ENCODE measurements at regions of chrX and their contacts with region 1.

Region 1: GRCh38 chrX:12946838-12947544 is 27.9 kb upstream of the TMSB4X start:
- DNase-seq: peak; percentile 85
- H3K4me3 Mint-ChIP-seq: peak overlapping the region; percentile 41
- H3K27ac Mint-ChIP-seq: peak overlapping the region; percentile 98
- H3K4me1 Mint-ChIP-seq: peaks cover 55% of the 10 kb centered on the region
- H3K27me3 Mint-ChIP-seq: no peaks in the 10 kb centered on the region

Region 2: DNA sequence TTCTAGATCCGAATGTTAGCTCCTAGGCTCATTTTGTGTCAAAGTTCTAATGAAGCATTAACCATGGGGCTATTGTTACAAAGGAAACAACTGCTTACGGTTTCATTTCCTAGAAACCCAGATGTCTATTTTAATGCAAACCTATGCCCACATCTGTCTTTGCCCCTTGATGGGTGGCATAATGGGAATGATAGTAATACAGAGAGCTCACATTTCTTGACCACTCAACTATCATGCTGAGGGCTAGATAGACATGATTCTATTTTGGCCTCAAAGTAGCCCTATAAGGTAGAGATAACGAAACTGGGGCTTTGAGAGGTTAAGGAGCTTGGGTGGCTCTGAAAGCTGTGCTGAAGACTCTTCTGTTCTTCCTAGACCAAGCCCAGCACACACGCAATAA is 78.2 kb before region 1 on chrX:
- CTCF ChIA-PET with region 1: no interaction called
- intact Hi-C with region 1: no loop called
- DNase-seq: no peak
- H3K4me3 Mint-ChIP-seq: no peak overlapping the region
- H3K27ac Mint-ChIP-seq: no peak overlapping the region
- H3K4me1 Mint-ChIP-seq: peaks cover 14% of the 10 kb centered on the region
- H3K27me3 Mint-ChIP-seq: no peaks in the 10 kb centered on the region

Region 3: GRCh38 chrX:12974796-12975669 is 28.0 kb after region 1 on chrX and contains the start of gene TMSB4X:
- CTCF ChIA-PET with region 1: interaction called, 125 read pairs
- intact Hi-C with region 1: loop called (anchors 1 kb)
- DNase-seq: peak; percentile 84
- H3K4me3 Mint-ChIP-seq: peak within 1 kb of the TSS; percentile 82
- H3K27ac Mint-ChIP-seq: peak within 1 kb of the TSS; percentile 96
- H3K4me1 Mint-ChIP-seq: peaks cover 18% of the 10 kb centered on the region
- H3K27me3 Mint-ChIP-seq: no peaks in the 10 kb centered on the region
- total RNA-seq, gene TMSB4X: 5,535 to 5,691 TPM

Region 4: GRCh38 chrX:13051529-13052172 is 104.7 kb after region 1 on chrX:
- CTCF ChIA-PET with region 1: interaction called, 5 read pairs
- intact Hi-C with region 1: loop called (anchors 1 kb)
- DNase-seq: peak; percentile 43
- H3K4me3 Mint-ChIP-seq: peak overlapping the region; percentile 36
- H3K27ac Mint-ChIP-seq: peak overlapping the region; percentile 95
- H3K4me1 Mint-ChIP-seq: peaks cover 77% of the 10 kb centered on the region
- H3K27me3 Mint-ChIP-seq: no peaks in the 10 kb centered on the region

Region 5: DNA sequence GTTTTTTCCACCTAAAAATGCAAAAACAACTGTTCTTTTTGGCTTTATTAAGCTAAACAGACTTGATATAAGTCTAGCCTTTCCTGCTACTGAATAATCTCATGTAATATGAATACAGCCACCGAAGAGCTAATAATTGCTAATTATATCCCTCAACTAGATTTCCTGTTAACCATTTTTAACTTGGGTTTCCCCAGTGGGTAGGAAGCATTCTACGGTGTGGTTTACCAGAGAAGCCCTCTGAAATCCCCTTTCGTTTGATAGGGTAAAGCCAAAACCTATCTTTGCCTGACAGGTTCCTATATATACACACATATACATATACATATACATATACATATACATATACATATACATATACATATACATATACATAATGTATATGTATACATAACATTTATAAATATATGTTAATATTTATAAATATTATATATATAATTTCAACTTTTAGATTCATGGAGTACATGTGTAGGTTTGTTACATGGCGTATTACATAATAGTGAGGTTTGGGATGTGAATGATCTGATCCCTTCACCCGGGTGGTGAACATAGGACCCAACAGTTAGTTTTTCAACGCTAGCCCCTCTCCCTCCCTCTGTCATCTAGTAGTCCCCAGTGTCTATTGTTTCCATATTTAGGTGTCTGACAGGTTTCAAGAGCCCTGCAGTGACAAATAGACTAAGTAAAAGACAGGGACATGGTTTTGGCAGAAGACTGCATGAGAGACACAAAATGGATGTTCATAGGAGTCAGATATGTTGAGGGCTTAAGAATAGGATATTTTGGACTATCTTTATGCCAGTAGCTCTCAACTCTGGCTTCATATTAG is 310.4 kb after region 1 on chrX:
- CTCF ChIA-PET with region 1: interaction called, 5 read pairs
- intact Hi-C with region 1: loop called (anchors 5 kb)
- DNase-seq: peak; percentile 17
- H3K4me3 Mint-ChIP-seq: no peak overlapping the region
- H3K27ac Mint-ChIP-seq: no peak overlapping the region
- H3K4me1 Mint-ChIP-seq: peaks cover 29% of the 10 kb centered on the region
- H3K27me3 Mint-ChIP-seq: no peaks in the 10 kb centered on the region

Region 6: DNA sequence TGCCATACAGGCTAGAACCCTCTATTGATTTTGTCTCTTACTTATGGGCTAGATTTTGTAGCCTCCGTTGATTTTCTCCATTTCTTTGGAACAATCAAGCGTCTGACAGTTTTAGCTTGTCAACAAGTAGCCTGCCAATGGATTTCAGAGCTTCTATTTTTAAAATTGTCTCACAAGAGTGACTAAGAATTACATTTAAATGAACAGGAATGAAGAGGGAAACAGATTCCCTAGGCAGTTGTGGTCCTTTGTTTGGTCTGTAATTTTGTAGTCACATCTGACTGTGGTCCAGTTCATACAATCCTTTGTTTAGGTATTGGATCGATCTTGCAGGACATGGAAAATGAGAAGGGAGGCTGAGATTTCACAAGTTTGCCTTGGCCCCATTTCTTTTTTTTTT is 535.8 kb after region 1 on chrX:
- CTCF ChIA-PET with region 1: interaction called, 36 read pairs
- intact Hi-C with region 1: no loop called
- DNase-seq: no peak
- H3K4me3 Mint-ChIP-seq: no peak overlapping the region
- H3K27ac Mint-ChIP-seq: no peak overlapping the region
- H3K4me1 Mint-ChIP-seq: peaks cover 10% of the 10 kb centered on the region
- H3K27me3 Mint-ChIP-seq: no peaks in the 10 kb centered on the region

Region 7: DNA sequence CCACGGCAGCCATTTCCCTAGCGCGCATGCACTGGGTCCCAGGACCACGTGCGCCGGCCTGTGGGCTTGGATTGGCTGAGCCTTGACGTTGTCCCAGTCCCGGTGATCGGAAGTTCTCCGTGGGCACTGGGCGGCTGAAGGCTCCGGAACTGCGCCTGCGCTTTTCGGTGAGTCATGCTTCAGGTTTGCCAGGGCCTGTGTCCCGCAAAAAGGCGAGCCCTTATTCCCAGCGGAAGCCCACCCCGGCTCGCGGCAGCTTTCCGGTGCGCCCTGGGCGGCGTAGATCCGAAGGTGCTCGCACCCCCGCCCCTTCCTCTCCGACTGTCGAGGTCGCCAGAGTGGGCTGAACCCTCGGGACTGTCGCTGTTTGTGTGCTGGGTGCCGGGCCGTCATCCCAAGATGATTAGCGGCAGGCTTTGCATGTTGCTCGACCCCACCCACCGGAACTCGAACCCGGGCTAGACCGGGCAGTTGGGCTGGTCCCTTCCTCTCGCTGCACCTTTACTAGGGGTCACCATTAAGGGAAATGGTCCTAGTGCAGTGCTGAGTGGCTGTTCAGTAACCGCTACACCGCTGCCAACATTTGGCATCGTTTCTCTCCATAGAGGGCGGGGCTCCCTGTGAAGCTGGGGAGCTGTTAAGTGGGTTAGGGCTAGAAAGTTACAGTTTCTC is 706.2 kb after region 1 on chrX and contains the start of gene TCEANC:
- CTCF ChIA-PET with region 1: no interaction called
- intact Hi-C with region 1: loop called (anchors 2 kb)
- DNase-seq: peak; percentile 95
- H3K4me3 Mint-ChIP-seq: peak within 1 kb of the TSS; percentile 88
- H3K27ac Mint-ChIP-seq: peak within 1 kb of the TSS; percentile 93
- H3K4me1 Mint-ChIP-seq: peaks cover 24% of the 10 kb centered on the region
- H3K27me3 Mint-ChIP-seq: no peaks in the 10 kb centered on the region
- total RNA-seq, gene TCEANC: 2.5 to 2.7 TPM